ENCODE measurements at regions of chr1 and their contacts with region 1.

Region 1: DNA sequence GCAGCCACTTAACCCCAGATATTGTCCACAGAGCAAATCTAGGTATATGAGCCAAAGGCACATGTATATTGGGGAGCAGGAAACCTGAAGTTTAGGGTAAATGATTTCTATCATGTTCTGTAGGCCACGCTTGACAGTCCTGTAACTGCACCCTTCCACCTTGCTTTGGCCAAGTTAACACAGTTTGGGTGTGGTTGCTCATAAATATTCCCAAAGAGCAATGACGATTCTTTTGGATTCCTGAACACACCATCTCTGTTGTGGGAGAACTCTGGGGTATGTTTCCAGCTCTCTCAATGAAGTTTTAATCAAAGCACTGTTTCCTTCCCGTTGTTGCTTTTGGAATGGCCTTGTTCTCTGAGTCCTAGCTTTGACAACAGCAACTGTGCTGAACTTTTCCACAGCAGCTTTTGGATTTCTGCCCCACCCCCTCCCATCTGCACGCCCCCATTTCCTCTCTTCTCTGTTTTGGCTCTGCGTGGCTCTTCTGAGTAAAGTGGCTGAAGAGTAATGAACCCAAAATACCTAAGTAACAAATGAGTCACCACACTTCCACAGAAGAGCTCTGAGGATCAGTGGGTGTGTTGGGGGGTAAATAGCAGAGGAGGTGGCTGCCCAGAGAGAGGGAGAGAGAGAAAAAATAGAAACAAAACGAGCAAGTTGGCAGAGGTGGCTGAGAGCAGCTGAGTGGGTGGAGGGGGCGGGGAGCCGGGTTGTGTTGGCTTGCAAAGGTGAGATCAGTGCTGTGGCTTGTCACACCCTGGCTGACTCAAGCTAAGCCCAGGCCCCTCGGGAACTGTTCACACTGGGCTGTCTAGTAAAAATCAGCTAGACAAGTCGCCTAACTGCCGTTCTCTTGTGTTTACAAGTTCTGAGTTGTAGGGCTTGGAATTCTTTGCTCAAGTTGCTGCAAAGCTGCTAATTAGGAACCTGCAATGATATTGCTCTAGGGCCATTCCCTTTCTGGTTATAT is 26.9 kb upstream of the RAP1A start:
- DNase-seq: peak; percentile 97
- H3K4me3 Mint-ChIP-seq: peak overlapping the region; percentile 57
- H3K27ac Mint-ChIP-seq: peak overlapping the region; percentile 82
- H3K4me1 Mint-ChIP-seq: peaks cover 73% of the 10 kb centered on the region
- H3K27me3 Mint-ChIP-seq: no peaks in the 10 kb centered on the region

Region 2: DNA sequence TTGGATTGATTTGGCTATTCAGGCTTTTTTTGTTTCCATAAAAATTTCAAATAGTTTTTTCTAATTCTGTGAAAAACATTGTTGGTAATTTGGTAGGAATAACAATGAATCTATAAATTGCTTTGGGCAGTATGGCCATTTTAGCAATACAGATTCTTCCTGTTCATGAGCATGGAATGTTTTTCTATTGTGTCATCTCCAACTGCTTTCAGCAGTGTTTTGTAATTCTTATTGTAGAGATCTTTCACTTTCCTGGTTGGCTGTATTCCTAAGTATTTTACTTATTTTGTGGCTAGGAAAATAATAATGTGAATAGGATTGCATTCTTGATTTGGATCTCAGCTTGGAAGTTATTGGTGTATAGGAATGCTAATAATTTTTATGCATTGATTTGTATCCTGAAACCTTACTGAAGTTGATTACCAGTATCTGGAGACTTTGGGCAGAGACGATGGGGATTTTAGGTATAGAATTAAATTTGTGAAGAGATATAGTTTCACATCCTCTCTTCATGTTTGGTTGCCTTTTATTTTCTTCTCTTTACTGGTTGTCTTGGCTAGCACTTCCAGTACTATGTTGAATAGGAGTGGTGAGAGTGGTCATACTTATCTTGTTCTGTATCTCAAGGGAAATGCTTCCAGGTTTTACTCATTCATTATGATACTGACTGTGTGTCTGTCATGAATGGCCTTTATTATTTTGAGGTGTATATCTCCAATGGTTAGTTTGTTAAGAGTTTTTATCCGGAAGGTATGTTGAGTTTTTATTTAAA is 510.1 kb before region 1 on chr1:
- CTCF ChIA-PET with region 1: no interaction called
- POLR2A ChIA-PET with region 1: no interaction called
- DNase-seq: no peak
- H3K4me3 Mint-ChIP-seq: no peak overlapping the region
- H3K27ac Mint-ChIP-seq: no peak overlapping the region
- H3K4me1 Mint-ChIP-seq: no peaks in the 10 kb centered on the region
- H3K27me3 Mint-ChIP-seq: peaks cover 27% of the 10 kb centered on the region

Region 3: GRCh38 chr1:111422566-111423391 is 169.9 kb before region 1 on chr1:
- CTCF ChIA-PET with region 1: no interaction called
- POLR2A ChIA-PET with region 1: no interaction called
- DNase-seq: no peak
- H3K4me3 Mint-ChIP-seq: no peak overlapping the region
- H3K27ac Mint-ChIP-seq: no peak overlapping the region
- H3K4me1 Mint-ChIP-seq: no peaks in the 10 kb centered on the region
- H3K27me3 Mint-ChIP-seq: peaks cover 1% of the 10 kb centered on the region

Region 4: DNA sequence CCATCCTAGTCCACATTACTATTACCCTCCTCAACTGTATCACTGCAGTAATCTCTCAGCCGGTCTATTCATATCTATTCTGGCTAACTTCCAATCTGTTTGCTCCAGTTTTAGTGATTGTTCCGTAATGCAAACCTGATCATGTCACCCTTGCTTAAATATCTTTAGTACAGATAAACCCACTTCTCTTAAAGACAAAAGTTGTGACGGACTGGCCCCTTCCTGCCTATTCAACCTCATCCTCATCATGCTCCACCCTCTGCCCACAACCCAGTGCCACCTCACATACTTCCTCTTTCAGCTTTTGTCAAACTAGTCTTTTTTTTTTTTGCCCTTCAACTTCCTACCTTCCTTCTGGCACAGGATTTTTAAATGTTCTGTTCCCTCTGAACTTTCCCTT is 121.7 kb before region 1 on chr1:
- CTCF ChIA-PET with region 1: no interaction called
- POLR2A ChIA-PET with region 1: interaction called, 20 read pairs
- DNase-seq: peak; percentile 86
- H3K4me3 Mint-ChIP-seq: no peak overlapping the region
- H3K27ac Mint-ChIP-seq: no peak overlapping the region
- H3K4me1 Mint-ChIP-seq: peaks cover 30% of the 10 kb centered on the region
- H3K27me3 Mint-ChIP-seq: no peaks in the 10 kb centered on the region

Region 5: GRCh38 chr1:111483166-111483819 is 109.4 kb before region 1 on chr1:
- CTCF ChIA-PET with region 1: no interaction called
- POLR2A ChIA-PET with region 1: no interaction called
- DNase-seq: no peak
- H3K4me3 Mint-ChIP-seq: no peak overlapping the region
- H3K27ac Mint-ChIP-seq: no peak overlapping the region
- H3K4me1 Mint-ChIP-seq: peaks cover 6% of the 10 kb centered on the region
- H3K27me3 Mint-ChIP-seq: peaks cover 35% of the 10 kb centered on the region

Region 6: GRCh38 chr1:111516005-111516535 is 76.6 kb before region 1 on chr1:
- CTCF ChIA-PET with region 1: interaction called, 7 read pairs
- POLR2A ChIA-PET with region 1: interaction called, 17 read pairs
- DNase-seq: no peak
- H3K4me3 Mint-ChIP-seq: no peak overlapping the region
- H3K27ac Mint-ChIP-seq: no peak overlapping the region
- H3K4me1 Mint-ChIP-seq: peaks cover 31% of the 10 kb centered on the region
- H3K27me3 Mint-ChIP-seq: no peaks in the 10 kb centered on the region

Region 7: GRCh38 chr1:111603979-111604378 is 11.3 kb after region 1 on chr1:
- CTCF ChIA-PET with region 1: interaction called, 52 read pairs
- POLR2A ChIA-PET with region 1: interaction called, 357 read pairs
- DNase-seq: peak; percentile 92
- H3K4me3 Mint-ChIP-seq: peak overlapping the region; percentile 76
- H3K27ac Mint-ChIP-seq: peak overlapping the region; percentile 98
- H3K4me1 Mint-ChIP-seq: peaks cover 75% of the 10 kb centered on the region
- H3K27me3 Mint-ChIP-seq: no peaks in the 10 kb centered on the region

Region 8: DNA sequence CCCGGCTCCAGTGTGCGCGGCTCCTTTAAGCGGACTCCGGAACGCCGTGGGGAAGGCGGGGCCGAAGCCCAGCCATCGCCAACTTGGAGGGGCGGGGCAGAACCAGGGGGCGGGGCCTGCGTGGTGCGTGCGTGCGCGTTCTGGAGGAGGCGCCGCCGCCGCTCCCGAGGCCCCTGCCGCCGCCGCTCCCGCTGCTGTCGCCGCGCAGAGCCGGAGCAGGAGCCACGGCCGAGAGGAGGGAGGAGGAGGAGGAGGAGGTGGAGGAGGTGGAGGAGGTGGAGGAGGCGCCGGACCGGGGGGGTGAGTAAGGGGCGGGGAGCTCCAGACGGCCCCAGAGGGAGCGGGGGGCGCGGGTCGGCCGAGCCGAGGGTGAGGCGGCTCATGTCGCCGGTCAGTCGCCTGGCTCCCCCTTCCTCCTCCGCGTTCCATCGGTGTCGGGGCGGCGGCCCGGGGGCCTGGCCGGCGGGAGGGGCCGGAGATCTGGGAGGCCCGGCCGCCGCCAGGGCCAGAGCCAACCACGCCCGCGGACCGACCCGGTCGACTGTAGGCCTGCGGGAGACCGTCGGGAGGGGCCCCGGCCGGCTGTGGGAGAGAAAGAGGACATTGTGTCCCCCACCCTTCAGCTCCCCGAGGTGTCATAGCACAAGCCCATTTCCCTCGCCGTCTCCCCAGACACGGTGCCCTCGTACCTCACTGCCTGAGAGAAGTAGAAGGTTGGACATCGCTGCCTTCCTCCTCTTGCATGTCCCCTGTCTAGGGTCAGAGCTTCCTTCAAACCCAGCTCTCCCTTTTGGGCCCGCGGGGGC is 27.2 kb after region 1 on chr1 and contains the start of gene RAP1A:
- CTCF ChIA-PET with region 1: interaction called, 14 read pairs
- POLR2A ChIA-PET with region 1: interaction called, 641 read pairs
- DNase-seq: peak; percentile 95
- H3K4me3 Mint-ChIP-seq: peak within 1 kb of the TSS; percentile 93
- H3K27ac Mint-ChIP-seq: peak within 1 kb of the TSS; percentile 86
- H3K4me1 Mint-ChIP-seq: peaks cover 70% of the 10 kb centered on the region
- H3K27me3 Mint-ChIP-seq: no peaks in the 10 kb centered on the region
- total RNA-seq, gene RAP1A: 219 to 221 TPM

Region 9: DNA sequence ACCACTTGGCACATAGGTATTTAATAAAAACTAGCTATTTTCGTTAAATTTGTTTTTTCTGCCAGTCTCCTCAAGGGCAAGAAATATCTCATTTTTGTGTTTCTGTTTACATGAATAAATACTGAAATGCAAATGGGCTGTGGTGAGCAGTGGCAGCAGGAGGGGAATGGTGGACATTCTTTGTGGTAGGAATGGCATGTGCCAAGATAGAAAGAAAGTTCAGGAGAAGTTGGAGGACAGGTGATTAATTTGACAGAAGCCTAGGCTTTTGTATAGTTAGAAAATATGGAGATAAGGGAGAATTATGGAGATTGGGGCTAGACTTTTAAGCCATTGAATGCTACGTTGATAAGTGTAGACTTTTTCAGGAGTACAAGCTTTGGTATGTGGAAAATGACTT is 35.5 kb after region 1 on chr1:
- CTCF ChIA-PET with region 1: interaction called, 5 read pairs
- POLR2A ChIA-PET with region 1: interaction called, 641 read pairs
- DNase-seq: no peak
- H3K4me3 Mint-ChIP-seq: peak overlapping the region; percentile 42
- H3K27ac Mint-ChIP-seq: peak overlapping the region; percentile 70
- H3K4me1 Mint-ChIP-seq: peaks cover 82% of the 10 kb centered on the region
- H3K27me3 Mint-ChIP-seq: no peaks in the 10 kb centered on the region

Region 10: GRCh38 chr1:111739194-111739924 is 146.7 kb after region 1 on chr1 and contains the start of gene INKA2:
- CTCF ChIA-PET with region 1: no interaction called
- POLR2A ChIA-PET with region 1: interaction called, 10 read pairs
- DNase-seq: peak; percentile 86
- H3K4me3 Mint-ChIP-seq: peak within 1 kb of the TSS; percentile 84
- H3K27ac Mint-ChIP-seq: peak within 1 kb of the TSS; percentile 52
- H3K4me1 Mint-ChIP-seq: peaks cover 23% of the 10 kb centered on the region
- H3K27me3 Mint-ChIP-seq: peaks cover 47% of the 10 kb centered on the region
- total RNA-seq, gene INKA2: 2.4 to 2.8 TPM